HCT116 (cell line): ENCODE measurements at regions of chr11 and their contacts with region 1.

Region 1: GRCh38 chr11:12802418-12803085 is 128.3 kb downstream of the TEAD1 start:
- DNase-seq: peak; percentile 97
- ATAC-seq: peak; percentile 79
- H3K4me3 ChIP-seq: peak overlapping the region; percentile 4 to 33
- H3K27ac ChIP-seq: peak overlapping the region; percentile 88
- H3K4me1 ChIP-seq: peaks cover 91 to 98% of the 10 kb centered on the region in 2 experiments
- H3K27me3 ChIP-seq: no peaks in the 10 kb centered on the region
- CTCF ChIP-seq: no peak
- POLR2A ChIP-seq: no peak
- RAD21 ChIP-seq: peak; percentile 39

Region 2: GRCh38 chr11:12673924-12674570 is 128.5 kb before region 1 on chr11 and contains the start of gene TEAD1:
- CTCF ChIA-PET with region 1: no interaction called
- POLR2A ChIA-PET with region 1: no interaction called
- RAD21 ChIA-PET with region 1: no interaction called
- intact Hi-C with region 1: loop called (anchors 5 kb)
- DNase-seq: peak; percentile 74
- ATAC-seq: peak; percentile 86
- H3K4me3 ChIP-seq: peak within 1 kb of the TSS; percentile 68 to 69
- H3K27ac ChIP-seq: peak within 1 kb of the TSS; percentile 71
- H3K4me1 ChIP-seq: peaks cover 25 to 39% of the 10 kb centered on the region in 2 experiments
- H3K27me3 ChIP-seq: no peaks in the 10 kb centered on the region
- CTCF ChIP-seq: no peak
- POLR2A ChIP-seq: peak; percentile 48
- RAD21 ChIP-seq: peak; percentile 9; the same call in 1 of the 2 replicates
- total RNA-seq, gene TEAD1: 103 TPM

Region 3: DNA sequence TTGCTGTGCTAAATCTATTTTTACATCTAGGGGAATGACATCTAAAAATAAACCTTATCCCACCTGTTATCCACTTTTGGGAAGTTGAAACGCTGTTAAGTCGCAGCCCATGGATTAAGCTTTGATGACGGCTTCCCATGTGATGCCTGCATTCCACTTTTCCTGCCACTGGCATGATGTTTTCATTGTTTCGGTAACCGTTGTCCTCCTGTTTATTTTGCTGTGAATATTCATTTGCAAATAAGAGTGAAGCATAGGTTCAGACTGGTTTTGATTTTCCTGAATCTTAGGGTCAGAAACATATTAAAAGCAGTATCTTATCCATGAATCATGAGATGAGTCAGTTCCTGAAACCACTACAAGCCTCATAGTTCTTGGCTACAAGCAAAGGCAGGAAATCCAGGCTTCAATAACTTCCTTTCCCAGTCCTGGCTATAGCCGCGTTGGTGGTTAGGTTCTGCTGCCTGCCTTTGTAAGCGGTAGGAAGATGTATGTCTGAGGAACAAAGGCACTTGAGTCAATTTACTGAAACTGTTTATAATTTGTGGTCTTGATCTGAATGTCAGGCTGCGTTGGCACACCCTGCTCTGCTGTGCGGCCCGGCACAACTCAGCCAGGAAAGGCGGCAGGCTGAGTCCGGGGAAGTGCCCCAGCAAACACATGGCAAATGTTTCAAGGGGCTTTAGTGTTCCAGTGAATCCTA is 108.9 kb before region 1 on chr11:
- CTCF ChIA-PET with region 1: no interaction called
- POLR2A ChIA-PET with region 1: no interaction called
- RAD21 ChIA-PET with region 1: no interaction called
- intact Hi-C with region 1: loop called (anchors 5 kb)
- DNase-seq: peak; percentile 96
- ATAC-seq: peak; percentile 83
- H3K4me3 ChIP-seq: peak overlapping the region; percentile 19 to 47
- H3K27ac ChIP-seq: peak overlapping the region; percentile 92
- H3K4me1 ChIP-seq: peaks cover 91 to 99% of the 10 kb centered on the region in 2 experiments
- H3K27me3 ChIP-seq: no peaks in the 10 kb centered on the region
- CTCF ChIP-seq: no peak
- POLR2A ChIP-seq: no peak
- RAD21 ChIP-seq: peak; percentile 43